OCI-LY7 (cell line): ENCODE measurements at regions of chr11 and their contacts with region 1.

Region 1: GRCh38 chr11:102495161-102496042 is 35.1 kb downstream of the MMP7 start:
- DNase-seq: peak; percentile 86
- H3K4me3 ChIP-seq: no peak overlapping the region
- H3K27ac ChIP-seq: no peak overlapping the region
- H3K4me1 ChIP-seq: peaks cover 19% of the 10 kb centered on the region
- CTCF ChIP-seq: peak; percentile 94

Region 2: DNA sequence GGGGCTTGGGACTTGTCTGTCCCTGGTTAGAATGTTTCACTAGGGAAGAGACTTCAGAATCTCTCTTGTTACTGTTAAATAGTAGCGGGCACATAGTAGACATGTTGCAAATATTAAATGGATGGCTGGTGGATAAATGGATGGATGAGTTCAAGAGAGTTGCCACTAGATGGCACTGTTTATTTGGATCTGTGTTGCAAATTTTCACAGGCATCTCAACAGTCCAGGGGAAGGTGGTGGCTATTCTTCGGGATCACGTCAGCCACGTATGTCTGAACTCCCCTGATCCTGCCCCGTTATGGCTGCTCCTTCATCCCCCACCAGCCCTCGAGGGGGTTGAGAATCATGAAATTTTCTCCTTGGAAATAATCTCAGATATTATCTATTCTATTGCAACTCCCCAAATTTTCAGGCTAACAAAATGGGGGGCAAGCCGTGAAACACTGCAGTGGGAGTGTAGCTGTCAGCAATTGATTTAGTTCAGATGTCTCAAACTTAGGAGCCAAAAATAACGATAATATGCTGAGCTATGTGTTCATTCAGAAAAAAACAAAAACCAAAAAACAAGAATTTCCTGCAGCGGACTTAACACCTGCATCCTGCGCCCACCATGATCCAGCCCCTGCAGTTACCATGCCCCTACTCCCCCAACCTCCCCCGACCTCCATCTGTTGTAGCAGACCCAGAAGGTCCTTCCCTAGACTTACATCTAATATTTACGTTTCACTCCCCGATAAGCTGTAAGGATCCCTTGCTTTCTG is 207.3 kb before region 1 on chr11:
- CTCF ChIA-PET with region 1: no interaction called
- POLR2A ChIA-PET with region 1: interaction called, 7 read pairs
- intact Hi-C with region 1: loop called (anchors 1 kb)
- DNase-seq: peak; percentile 86
- H3K4me3 ChIP-seq: peak overlapping the region; percentile 36
- H3K27ac ChIP-seq: no peak overlapping the region
- H3K4me1 ChIP-seq: peaks cover 26% of the 10 kb centered on the region
- CTCF ChIP-seq: peak; percentile 93

Region 3: GRCh38 chr11:102346748-102347461 is 148.5 kb before region 1 on chr11 and contains the start of gene BIRC2:
- CTCF ChIA-PET with region 1: no interaction called
- POLR2A ChIA-PET with region 1: interaction called, 6 read pairs
- intact Hi-C with region 1: loop called (anchors 1 kb)
- DNase-seq: peak; percentile 95
- H3K4me3 ChIP-seq: peak within 1 kb of the TSS; percentile 76
- H3K27ac ChIP-seq: peak within 1 kb of the TSS; percentile 78
- H3K4me1 ChIP-seq: peaks cover 25% of the 10 kb centered on the region
- CTCF ChIP-seq: peak; percentile 75
- total RNA-seq, gene BIRC2: 32.6 and 38.0 TPM in 2 replicates

Region 4: GRCh38 chr11:102390667-102391465 is 104.5 kb before region 1 on chr11:
- CTCF ChIA-PET with region 1: interaction called, 3 read pairs
- POLR2A ChIA-PET with region 1: interaction called, 5 read pairs
- intact Hi-C with region 1: loop called (anchors 1 kb)
- DNase-seq: peak; percentile 74
- H3K4me3 ChIP-seq: no peak overlapping the region
- H3K27ac ChIP-seq: no peak overlapping the region
- H3K4me1 ChIP-seq: peaks cover 28% of the 10 kb centered on the region
- CTCF ChIP-seq: peak; percentile 95

Region 5: GRCh38 chr11:102451681-102452460 is 43.5 kb before region 1 on chr11:
- CTCF ChIA-PET with region 1: no interaction called
- POLR2A ChIA-PET with region 1: interaction called, 4 read pairs
- intact Hi-C with region 1: loop called (anchors 2 kb)
- DNase-seq: peak; percentile 94
- H3K4me3 ChIP-seq: peak overlapping the region; percentile 95
- H3K27ac ChIP-seq: peak overlapping the region; percentile 88
- H3K4me1 ChIP-seq: peaks cover 63% of the 10 kb centered on the region
- CTCF ChIP-seq: peak; percentile 71

Region 6: GRCh38 chr11:102614485-102614884 is 119.1 kb after region 1 on chr11:
- CTCF ChIA-PET with region 1: interaction called, 15 read pairs
- POLR2A ChIA-PET with region 1: interaction called, 5 read pairs
- intact Hi-C with region 1: loop called (anchors 1 kb)
- DNase-seq: peak; percentile 23
- H3K4me3 ChIP-seq: no peak overlapping the region
- H3K27ac ChIP-seq: no peak overlapping the region
- H3K4me1 ChIP-seq: peaks cover 21% of the 10 kb centered on the region
- CTCF ChIP-seq: peak; percentile 68